ENCODE measurements at regions of chr12 and their contacts with region 1.

Region 1: DNA sequence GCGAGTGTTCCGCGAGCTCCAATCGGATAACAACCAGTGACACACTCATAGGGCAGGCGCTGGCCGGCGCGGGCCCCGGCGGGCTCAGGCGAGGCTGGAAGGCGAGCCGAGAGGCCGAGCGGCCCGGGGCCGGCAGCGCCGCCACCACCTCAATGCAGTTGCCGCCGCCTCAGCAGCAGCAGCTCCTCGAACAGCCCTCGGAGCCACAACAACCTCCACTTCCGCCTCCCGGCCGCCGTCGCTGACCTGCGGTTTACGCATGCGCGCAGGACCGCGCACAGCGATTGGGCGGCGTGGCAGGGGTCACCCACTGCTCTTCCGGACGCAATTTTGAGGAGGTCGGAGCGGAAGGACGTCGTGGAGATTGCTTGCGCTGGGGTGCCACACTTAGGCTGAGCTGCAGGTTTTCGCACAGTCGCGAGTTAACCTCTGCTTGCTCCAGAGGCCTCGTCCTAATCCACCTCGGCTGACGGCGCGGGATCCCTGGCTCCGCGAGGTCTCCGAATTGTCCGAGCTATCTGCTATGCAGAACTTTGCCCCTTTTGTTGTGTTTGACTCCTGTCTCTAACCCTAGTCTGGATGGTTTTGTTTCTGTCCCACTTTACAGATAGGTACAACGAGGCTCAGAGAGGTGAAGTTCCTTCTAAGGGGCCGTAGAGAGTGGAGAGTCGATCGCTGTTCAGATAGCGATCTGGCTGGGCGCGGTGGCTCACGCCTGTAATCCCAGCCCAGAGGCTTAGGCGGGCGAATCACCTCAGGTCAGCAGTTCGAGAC is at the starts of genes ACAD10 and BRAP:
- DNase-seq: peak; percentile 96 to 98 (median 97)
- ATAC-seq: peak; percentile 95
- H3K4me3 ChIP-seq: peak within 1 kb of the TSS; percentile 86
- H3K27ac ChIP-seq: peak within 1 kb of the TSS; percentile 97
- H3K4me1 ChIP-seq: peaks cover 13 to 15% of the 10 kb centered on the region in 2 experiments; a peak in 4 of 5 replicates
- H3K27me3 ChIP-seq: no peaks in the 10 kb centered on the region
- CTCF ChIP-seq: no peak
- EP300 ChIP-seq: no peak
- POLR2A ChIP-seq: peak; percentile 97
- RAD21 ChIP-seq: 0 out of 4 replicates have a peak, but pooled peaks have one; percentile 14 to 16
- polyA plus RNA-seq, gene ACAD10: 2.3 to 5.0 TPM
- polyA plus RNA-seq, gene BRAP: 2.2 to 3.4 TPM

Region 2: GRCh38 chr12:111330800-111331752 is 354.9 kb before region 1 on chr12:
- CTCF ChIA-PET with region 1: no interaction called
- POLR2A ChIA-PET with region 1: no interaction called
- in situ Hi-C with region 1: no loop called
- intact Hi-C with region 1: loop called (anchors 10 kb)
- DNase-seq: peak; percentile 40 to 68 (median 50)
- ATAC-seq: peak; percentile 87
- H3K4me3 ChIP-seq: no peak overlapping the region
- H3K27ac ChIP-seq: no peak overlapping the region
- H3K4me1 ChIP-seq: no peaks in the 10 kb centered on the region; a peak in 1 of 5 replicates
- H3K27me3 ChIP-seq: peaks cover 18 to 64% of the 10 kb centered on the region in 2 experiments; a peak in 4 of 5 replicates
- CTCF ChIP-seq: peak; percentile 59 to 75 (median 71)
- EP300 ChIP-seq: no peak
- POLR2A ChIP-seq: no peak
- RAD21 ChIP-seq: peak; percentile 50 to 70

Region 3: GRCh38 chr12:111405149-111405860 is 280.6 kb before region 1 on chr12:
- CTCF ChIA-PET with region 1: no interaction called
- POLR2A ChIA-PET with region 1: interaction called, 4 read pairs
- in situ Hi-C with region 1: no loop called
- intact Hi-C with region 1: loop called (anchors 5 kb)
- DNase-seq: peak; percentile 97 to 99 (median 98)
- ATAC-seq: peak; percentile 76
- H3K4me3 ChIP-seq: peak overlapping the region; percentile 93
- H3K27ac ChIP-seq: peak overlapping the region; percentile 97
- H3K4me1 ChIP-seq: peaks cover 50 to 76% of the 10 kb centered on the region in 2 experiments
- H3K27me3 ChIP-seq: no peaks in the 10 kb centered on the region; a peak in 1 of 5 replicates
- CTCF ChIP-seq: peak; percentile 75 to 76 (median 75)
- EP300 ChIP-seq: peak; percentile 94
- POLR2A ChIP-seq: peak; percentile 88
- RAD21 ChIP-seq: peak; percentile 37 to 47; a peak in 3 of 4 replicates

Region 4: DNA sequence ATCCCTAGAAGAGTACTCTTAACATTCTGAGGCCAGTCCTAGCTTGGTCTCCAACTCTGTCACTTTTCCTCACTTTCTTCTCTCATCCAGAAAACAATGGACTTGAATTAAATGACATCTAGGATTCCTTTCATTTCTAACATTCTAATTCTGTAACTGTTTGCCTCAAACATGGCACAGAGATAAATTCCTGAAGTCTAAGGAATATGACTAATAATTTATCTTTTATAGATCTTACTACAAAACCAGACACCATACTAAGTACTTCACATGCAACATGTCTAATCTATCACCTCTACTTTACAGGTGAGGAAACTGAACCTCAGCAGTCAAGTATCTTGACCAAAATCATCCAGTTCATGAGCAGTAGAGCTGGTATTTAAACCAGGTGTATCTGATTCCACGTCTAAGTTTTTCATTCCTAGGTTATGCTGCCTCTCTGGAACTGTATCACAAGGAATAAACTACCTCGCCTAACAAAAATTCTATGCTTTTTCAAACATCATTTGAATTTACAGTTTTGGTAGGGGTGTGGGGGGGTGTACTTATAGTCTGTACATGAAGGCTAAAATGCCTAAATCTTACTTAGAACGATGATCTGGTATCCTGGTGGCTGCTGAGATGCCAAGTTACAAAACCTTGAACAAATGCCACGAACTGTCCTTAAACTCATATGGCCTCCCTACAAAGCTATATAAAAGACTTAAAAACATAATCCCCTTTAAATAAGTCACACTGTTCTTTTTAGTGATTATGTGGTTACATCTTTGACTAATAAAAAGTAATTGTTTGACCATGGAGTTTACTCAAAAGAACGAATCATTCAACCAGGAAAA is 128.4 kb before region 1 on chr12:
- CTCF ChIA-PET with region 1: no interaction called
- POLR2A ChIA-PET with region 1: no interaction called
- in situ Hi-C with region 1: no loop called
- intact Hi-C with region 1: no loop called
- DNase-seq: no peak
- ATAC-seq: no peak
- H3K4me3 ChIP-seq: no peak overlapping the region
- H3K27ac ChIP-seq: peak overlapping the region; percentile 19; the same call in 1 of the 3 replicates
- H3K4me1 ChIP-seq: 0 out of 5 replicates have a peak, but pooled peaks cover 0 to 4% of the 10 kb centered on the region in 2 experiments
- H3K27me3 ChIP-seq: no peaks in the 10 kb centered on the region
- CTCF ChIP-seq: no peak
- EP300 ChIP-seq: no peak
- POLR2A ChIP-seq: no peak
- RAD21 ChIP-seq: no peak

Region 5: DNA sequence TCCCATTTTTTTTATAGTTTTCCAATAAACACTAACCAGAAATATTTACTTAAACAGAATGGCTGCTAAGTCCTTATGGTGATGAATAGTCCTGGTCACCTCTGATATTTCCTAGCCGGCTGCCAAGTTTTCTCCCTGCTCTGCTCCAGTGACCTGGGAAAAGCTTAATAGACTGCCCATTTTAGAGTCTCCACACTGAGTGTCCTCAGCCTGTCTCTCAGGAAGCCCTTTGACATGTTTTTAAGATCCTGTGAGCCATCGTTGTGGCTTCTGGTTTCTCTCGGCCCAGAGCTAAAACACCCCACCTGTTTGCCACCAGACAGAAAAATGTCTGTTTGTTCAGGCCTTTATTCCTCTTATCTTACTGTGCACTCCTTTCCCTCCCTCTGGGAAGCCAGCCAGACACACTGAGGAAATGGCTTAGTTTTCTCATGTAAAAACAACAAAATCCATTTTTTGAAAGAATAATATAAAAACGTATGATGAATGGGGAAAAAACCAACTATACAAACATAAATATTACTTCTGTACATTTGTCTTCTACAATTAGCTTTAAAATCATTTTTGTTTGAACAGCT is 55.4 kb after region 1 on chr12:
- CTCF ChIA-PET with region 1: no interaction called
- POLR2A ChIA-PET with region 1: interaction called, 4 read pairs
- in situ Hi-C with region 1: loop called (anchors 5 kb)
- intact Hi-C with region 1: loop called (anchors 2 kb)
- DNase-seq: peak; percentile 62 to 90 (median 75)
- ATAC-seq: peak; percentile 91
- H3K4me3 ChIP-seq: peak overlapping the region; percentile 10; the same call in 1 of the 2 replicates
- H3K27ac ChIP-seq: peak overlapping the region; percentile 81
- H3K4me1 ChIP-seq: peaks cover 12 to 33% of the 10 kb centered on the region in 2 experiments; a peak in 4 of 5 replicates
- H3K27me3 ChIP-seq: no peaks in the 10 kb centered on the region
- CTCF ChIP-seq: no peak
- EP300 ChIP-seq: peak; percentile 84
- POLR2A ChIP-seq: no peak
- RAD21 ChIP-seq: no peak

Region 6: DNA sequence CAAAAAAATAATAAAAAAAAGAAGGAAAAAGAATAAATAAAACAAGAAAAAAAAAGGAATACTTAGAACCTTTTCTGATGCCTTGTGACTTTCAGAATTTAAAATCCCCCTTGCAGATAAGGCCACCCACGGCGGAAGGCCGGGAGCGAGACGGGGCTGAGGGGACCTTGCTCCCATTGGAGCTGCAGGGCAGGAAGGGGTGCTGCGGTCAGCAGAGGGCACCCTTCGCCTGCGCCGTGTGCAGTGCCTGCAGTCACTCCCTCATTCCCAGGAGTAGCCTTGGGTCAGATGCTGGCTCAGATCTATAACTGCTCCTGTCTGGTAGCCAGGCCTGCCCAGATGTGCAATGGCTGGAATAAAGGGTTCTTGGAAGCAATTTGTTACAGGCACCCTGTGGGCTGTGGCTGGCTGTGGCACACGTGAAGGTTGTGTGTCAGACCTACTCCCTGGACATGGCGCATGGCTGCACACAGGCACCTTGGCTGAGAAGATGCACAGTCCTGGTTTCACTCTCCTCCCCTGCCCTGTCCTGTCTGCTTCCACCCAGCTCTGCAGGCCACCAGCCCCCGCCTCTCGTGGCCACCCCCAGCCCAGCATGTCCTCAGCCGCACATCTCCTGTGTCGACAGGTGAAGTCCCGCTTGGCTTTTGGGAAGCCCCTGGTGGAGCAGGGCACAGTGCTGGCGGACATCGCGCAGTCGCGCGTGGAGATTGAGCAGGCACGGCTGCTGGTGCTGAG is 67.4 kb after region 1 on chr12:
- CTCF ChIA-PET with region 1: interaction called, 3 read pairs
- POLR2A ChIA-PET with region 1: no interaction called
- in situ Hi-C with region 1: no loop called
- intact Hi-C with region 1: loop called (anchors 1 kb)
- DNase-seq: peak; percentile 74 to 87 (median 85)
- ATAC-seq: peak; percentile 97
- H3K4me3 ChIP-seq: no peak overlapping the region
- H3K27ac ChIP-seq: no peak overlapping the region
- H3K4me1 ChIP-seq: peaks cover 10 to 29% of the 10 kb centered on the region in 2 experiments; a peak in 3 of 5 replicates
- H3K27me3 ChIP-seq: no peaks in the 10 kb centered on the region
- CTCF ChIP-seq: peak; percentile 86 to 92 (median 90)
- EP300 ChIP-seq: no peak
- POLR2A ChIP-seq: no peak
- RAD21 ChIP-seq: peak; percentile 87 to 98

Region 7: DNA sequence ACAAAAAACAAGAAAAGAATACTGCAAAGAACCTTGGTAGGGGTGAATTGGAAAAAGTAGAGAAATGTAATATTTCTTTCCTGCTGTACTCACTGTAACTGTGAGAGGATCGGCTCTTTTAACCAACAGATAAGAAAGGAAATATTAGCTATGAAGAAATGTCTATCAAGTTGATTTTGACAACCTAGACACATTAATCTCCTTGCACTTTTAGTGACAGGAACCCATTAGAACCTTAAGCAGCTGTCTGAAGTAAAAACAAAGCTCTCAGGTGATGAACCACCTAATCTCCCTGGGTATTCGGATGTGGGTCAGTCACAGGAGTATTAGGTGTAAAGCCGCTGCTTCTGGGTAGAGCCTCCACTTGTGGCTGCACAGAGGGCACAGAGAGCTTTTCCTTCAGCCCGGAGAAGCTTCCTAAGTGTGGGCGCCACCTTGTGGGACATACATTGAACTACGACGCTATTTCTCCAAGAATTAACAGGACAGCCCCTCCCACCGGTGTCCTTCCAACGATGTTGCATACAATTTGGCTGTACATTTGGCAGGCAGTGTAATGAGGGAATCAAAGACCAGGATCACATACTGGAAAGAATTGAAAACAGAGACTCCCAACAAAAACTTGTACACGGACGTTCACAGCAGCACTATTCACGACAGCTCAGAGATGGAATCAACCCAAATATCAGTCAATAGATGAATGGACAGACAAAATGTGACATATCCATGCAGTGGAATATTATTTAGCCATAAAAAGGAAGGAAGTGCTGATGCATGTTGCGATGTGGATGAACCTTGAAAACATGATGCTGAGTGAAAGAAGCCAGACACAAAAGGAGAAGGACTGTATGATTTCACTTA is 127.2 kb after region 1 on chr12:
- CTCF ChIA-PET with region 1: no interaction called
- POLR2A ChIA-PET with region 1: interaction called, 5 read pairs
- in situ Hi-C with region 1: no loop called
- intact Hi-C with region 1: loop called (anchors 1 kb)
- DNase-seq: peak; percentile 84 to 89 (median 84)
- ATAC-seq: peak; percentile 97
- H3K4me3 ChIP-seq: no peak overlapping the region
- H3K27ac ChIP-seq: no peak overlapping the region
- H3K4me1 ChIP-seq: no peaks in the 10 kb centered on the region; a peak in 2 of 5 replicates
- H3K27me3 ChIP-seq: peaks cover 0 to 4% of the 10 kb centered on the region in 2 experiments; a peak in 1 of 5 replicates
- CTCF ChIP-seq: peak; percentile 88 to 96 (median 93)
- EP300 ChIP-seq: no peak
- POLR2A ChIP-seq: no peak
- RAD21 ChIP-seq: peak; percentile 87 to 96